Aorta (tissue), 5 donors: ENCODE measurements at regions of chr2 and their contacts with region 1.

Region 1: DNA sequence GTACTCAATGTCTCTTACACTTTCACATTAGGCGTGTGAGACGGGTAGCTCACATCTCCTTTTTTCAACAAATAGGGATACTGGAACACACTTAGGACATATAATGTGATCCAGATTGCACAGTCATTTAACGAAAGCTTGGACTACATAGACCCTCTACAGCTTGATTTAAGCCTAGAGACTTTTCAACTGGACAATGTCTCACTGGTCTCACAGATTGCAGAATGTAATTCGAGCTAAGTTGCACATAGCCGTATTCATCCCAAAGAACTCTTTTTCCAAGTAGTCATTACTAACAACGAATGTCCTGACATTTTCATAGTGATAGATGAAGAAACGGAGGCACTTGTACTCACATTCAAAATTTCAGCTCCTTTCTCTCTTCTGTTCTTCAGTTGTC is 612.1 kb downstream of the ZEB2 start:
- DNase-seq: no peak
- ATAC-seq: no peak
- H3K4me3 ChIP-seq: no peak overlapping the region
- H3K27ac ChIP-seq: no peak overlapping the region
- H3K4me1 ChIP-seq: no peaks in the 10 kb centered on the region
- H3K27me3 ChIP-seq: no peaks in the 10 kb centered on the region

Region 2: GRCh38 chr2:143802871-143803650 is 104.7 kb before region 1 on chr2:
- intact Hi-C with region 1: no loop called
- DNase-seq: no peak
- ATAC-seq: no peak
- H3K4me3 ChIP-seq: no peak overlapping the region
- H3K27ac ChIP-seq: no peak overlapping the region
- H3K4me1 ChIP-seq: peaks cover 0 to 8% of the 10 kb centered on the region in 2 donors
- H3K27me3 ChIP-seq: no peaks in the 10 kb centered on the region

Region 3: DNA sequence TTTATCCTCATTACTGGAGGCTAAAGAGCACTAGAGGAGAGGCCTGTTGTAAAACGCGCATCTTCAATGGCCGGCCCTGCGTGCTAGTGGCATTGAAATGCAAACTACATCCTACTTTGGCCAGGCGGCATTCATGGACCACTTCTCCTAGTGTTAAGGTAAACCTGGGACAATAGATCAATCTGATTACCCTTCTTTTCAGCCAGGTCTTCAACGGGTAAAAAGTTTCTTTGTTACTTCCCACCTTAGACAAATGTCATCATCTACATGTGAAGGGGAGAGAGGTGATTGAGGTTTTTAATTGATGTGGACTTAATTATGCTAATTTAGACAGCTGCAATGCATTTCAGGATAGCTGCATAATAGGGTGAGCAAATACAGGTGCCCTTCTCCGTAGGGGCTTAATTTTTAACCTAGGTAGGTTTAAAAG is 15.9 kb before region 1 on chr2:
- intact Hi-C with region 1: loop called in 1 of 2 experiments (anchors 1 kb)
- DNase-seq: no peak
- ATAC-seq: no peak
- H3K4me3 ChIP-seq: no peak overlapping the region
- H3K27ac ChIP-seq: no peak overlapping the region
- H3K4me1 ChIP-seq: no peaks in the 10 kb centered on the region
- H3K27me3 ChIP-seq: no peaks in the 10 kb centered on the region